Mammary epithelial cell (primary cell): ENCODE measurements at regions of chr11 and their contacts with region 1.

Region 1: DNA sequence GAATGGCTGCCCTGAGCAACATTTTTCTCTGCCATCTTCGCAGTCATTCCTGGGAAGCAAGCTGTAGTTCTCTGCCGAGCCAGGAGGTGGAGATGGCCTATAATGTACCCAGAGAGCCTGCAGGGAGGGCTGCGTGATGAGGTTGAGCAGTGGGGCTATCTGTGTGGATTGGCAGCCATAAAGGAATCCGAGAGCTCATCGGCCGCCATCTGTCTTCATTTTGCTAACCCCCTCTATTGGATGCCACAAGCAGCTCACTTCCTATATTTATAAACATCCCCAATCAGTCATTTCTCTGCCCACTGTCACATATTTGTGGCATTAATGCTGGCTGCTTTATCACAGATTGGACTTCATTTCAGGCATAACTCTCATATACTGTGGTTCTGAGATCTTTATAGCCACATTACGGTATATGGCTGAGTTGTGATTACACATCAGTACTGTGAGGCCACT is 209.5 kb downstream of the NTM start:
- DNase-seq: peak; percentile 1
- H3K4me3 ChIP-seq: no peak overlapping the region
- H3K27ac ChIP-seq: no peak overlapping the region
- H3K4me1 ChIP-seq: no peaks in the 10 kb centered on the region
- H3K27me3 ChIP-seq: no peaks in the 10 kb centered on the region
- CTCF ChIP-seq: peak; percentile 39 to 56

Region 2: DNA sequence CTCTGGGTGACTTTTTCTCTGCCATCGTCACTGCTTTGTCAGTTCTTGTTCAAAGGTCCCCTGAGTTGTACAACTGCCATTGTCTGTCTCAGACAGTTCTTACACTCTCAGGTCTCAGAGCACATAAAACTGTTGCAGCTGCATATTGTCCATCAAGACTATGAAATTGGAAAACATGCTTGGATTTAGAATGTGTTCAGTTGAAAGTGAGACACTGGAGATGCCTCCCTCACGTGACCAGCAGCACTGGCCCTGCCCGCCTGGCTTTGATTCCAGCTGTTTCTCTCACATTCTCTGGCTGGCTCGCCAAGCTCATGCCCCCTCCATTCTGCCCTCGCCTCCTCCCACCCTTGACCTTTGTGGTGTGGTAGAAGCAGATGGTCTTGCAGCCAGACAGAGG is 34.7 kb after region 1 on chr11:
- CTCF ChIA-PET with region 1: no interaction called
- dilution Hi-C with region 1: loop called (anchors 5 kb)
- in situ Hi-C with region 1: no loop called
- intact Hi-C with region 1: no loop called
- DNase-seq: no peak
- H3K4me3 ChIP-seq: no peak overlapping the region
- H3K27ac ChIP-seq: no peak overlapping the region
- H3K4me1 ChIP-seq: no peaks in the 10 kb centered on the region
- H3K27me3 ChIP-seq: peaks cover 2% of the 10 kb centered on the region
- CTCF ChIP-seq: no peak